ENCODE measurements at regions of chr11 and their contacts with region 1.

Region 1: GRCh38 chr11:34357701-34358257 is at the start of gene ABTB2:
- DNase-seq: peak; percentile 96 to 97
- ATAC-seq: peak; percentile 78 to 88
- H3K4me3 ChIP-seq: peak within 1 kb of the TSS; percentile 79
- H3K27ac ChIP-seq: peak within 1 kb of the TSS; percentile 79 to 91
- H3K4me1 ChIP-seq: peaks cover 32% of the 10 kb centered on the region
- CTCF ChIP-seq: no peak
- EP300 ChIP-seq: no peak
- POLR2A ChIP-seq: peak; percentile 99
- RAD21 ChIP-seq: peak in 1 of 2 experiments; percentile 17; a peak in 4 of 5 replicates
- polyA plus RNA-seq, gene ABTB2: 8.9 and 10.3 TPM in 2 replicates

Region 2: DNA sequence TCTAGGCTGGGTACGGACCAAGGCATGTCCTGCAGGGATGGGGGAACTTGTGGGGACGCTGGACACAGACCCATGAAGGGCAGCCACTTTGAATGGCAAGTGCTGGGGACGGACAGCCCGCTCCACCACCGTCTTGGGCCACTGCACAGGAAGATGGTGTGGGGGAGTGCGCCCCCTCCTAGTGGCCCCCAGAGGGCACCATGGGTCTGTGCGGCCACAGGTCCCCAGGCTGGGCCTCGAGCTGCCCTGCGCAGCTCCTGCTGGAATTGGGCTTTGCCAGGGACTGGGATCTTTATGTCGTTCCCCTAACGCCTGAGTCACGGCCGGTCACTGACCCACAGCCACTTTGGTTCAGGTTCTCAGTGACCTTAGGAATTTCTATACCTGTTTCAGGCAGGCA is 208.0 kb before region 1 on chr11:
- CTCF ChIA-PET with region 1: interaction called, 17 read pairs
- POLR2A ChIA-PET with region 1: no interaction called
- DNase-seq: peak; percentile 33 to 36
- ATAC-seq: peak; percentile 57 to 80
- H3K4me3 ChIP-seq: no peak overlapping the region
- H3K27ac ChIP-seq: no peak overlapping the region
- H3K4me1 ChIP-seq: no peaks in the 10 kb centered on the region
- CTCF ChIP-seq: peak; percentile 34
- EP300 ChIP-seq: no peak
- POLR2A ChIP-seq: no peak
- RAD21 ChIP-seq: peak; percentile 54 to 62

Region 3: DNA sequence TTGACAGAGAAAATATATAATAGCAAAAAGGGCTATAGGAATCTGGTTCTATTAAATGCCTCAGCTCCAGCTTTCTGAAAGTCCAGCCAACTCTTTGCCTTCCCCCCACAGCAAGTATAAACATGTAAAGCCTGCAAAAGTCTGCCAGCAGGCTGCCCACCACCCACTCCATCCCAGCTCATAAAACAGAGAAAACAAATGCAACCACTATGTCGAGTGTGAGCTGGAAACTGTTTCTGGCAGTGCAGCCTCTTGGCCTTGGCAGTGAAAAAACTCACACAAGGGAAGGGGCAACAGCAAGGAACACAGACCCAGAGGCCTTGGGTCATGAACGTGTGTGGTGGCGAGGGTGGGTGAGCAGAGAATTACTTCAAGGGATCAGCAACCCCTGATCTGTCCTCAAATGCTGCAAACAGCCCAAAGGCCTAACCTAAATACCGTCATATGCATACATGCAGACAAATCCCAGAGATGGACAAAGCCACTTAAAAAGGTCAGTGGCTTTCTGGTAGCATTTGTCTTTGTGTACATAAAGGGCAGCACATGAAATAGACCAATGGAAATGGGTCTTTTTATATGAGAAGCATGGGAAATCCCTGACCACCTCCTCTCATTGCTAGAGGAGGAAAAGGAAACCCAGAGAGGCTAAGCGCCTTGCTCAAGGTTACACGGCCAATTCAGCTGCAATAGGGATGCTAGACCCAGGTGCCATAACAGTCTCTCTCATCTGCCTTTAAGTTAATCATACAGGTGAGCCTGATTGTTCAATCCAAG is 177.6 kb before region 1 on chr11:
- CTCF ChIA-PET with region 1: interaction called, 170 read pairs
- POLR2A ChIA-PET with region 1: interaction called, 40 read pairs
- DNase-seq: no peak
- ATAC-seq: no peak
- H3K4me3 ChIP-seq: no peak overlapping the region
- H3K27ac ChIP-seq: no peak overlapping the region
- H3K4me1 ChIP-seq: peaks cover 12% of the 10 kb centered on the region
- CTCF ChIP-seq: no peak
- EP300 ChIP-seq: no peak
- POLR2A ChIP-seq: no peak
- RAD21 ChIP-seq: no peak

Region 4: GRCh38 chr11:34214961-34215805 is 142.6 kb before region 1 on chr11:
- CTCF ChIA-PET with region 1: interaction called, 11 read pairs
- POLR2A ChIA-PET with region 1: interaction called, 5 read pairs
- DNase-seq: peak; percentile 63 to 64
- ATAC-seq: peak; percentile 80 to 91
- H3K4me3 ChIP-seq: no peak overlapping the region
- H3K27ac ChIP-seq: peak overlapping the region; percentile 20 to 70; a peak in 5 of 6 replicates
- H3K4me1 ChIP-seq: peaks cover 59% of the 10 kb centered on the region
- CTCF ChIP-seq: no peak
- EP300 ChIP-seq: no peak
- POLR2A ChIP-seq: no peak
- RAD21 ChIP-seq: no peak

Region 5: DNA sequence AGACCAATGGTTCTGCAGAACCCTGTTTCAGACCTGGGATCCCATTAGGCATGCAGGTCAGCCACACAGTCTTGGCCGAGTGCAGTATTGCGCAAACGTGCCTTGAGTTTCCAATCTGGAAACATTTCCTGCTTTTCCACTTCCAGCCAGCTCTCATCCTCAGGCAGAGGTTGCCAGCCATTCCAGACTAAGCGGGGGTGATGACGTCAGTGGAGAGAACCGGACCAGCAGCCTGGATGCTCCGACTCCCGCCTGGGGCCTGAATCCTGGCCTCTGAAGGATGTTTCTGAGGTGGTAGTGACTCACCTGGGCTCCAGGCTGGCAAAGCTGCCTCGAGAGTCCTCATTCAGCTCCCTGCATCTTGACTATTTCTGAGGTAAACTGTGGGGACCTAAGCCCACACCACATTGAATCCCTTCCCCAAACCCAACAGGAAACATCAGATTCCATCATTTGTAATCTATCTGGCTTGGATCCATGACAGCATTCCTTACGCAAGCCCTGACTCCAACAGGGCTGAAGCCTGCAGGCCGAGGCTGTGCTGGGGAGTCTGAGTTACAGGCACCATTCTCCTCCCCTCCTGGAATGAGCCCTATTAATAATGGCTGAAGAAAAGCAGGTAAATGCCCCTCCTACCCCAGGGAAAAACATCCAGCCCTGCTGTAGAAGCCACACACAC is 82.9 kb before region 1 on chr11:
- CTCF ChIA-PET with region 1: interaction called, 5 read pairs
- POLR2A ChIA-PET with region 1: interaction called, 10 read pairs
- DNase-seq: peak; percentile 94 to 96
- ATAC-seq: peak; percentile 96 to 100
- H3K4me3 ChIP-seq: no peak overlapping the region
- H3K27ac ChIP-seq: peak overlapping the region; percentile 72 to 90
- H3K4me1 ChIP-seq: peaks cover 41% of the 10 kb centered on the region
- CTCF ChIP-seq: no peak
- EP300 ChIP-seq: peak; percentile 68 to 75; a peak in 4 of 5 replicates
- POLR2A ChIP-seq: no peak
- RAD21 ChIP-seq: peak; percentile 24 to 47; a peak in 4 of 5 replicates

Region 6: GRCh38 chr11:34395916-34396550 is 38.3 kb after region 1 on chr11:
- CTCF ChIA-PET with region 1: no interaction called
- POLR2A ChIA-PET with region 1: no interaction called
- DNase-seq: peak; percentile 24 to 32
- ATAC-seq: peak; percentile 64 to 68; a peak in 4 of 6 replicates
- H3K4me3 ChIP-seq: no peak overlapping the region
- H3K27ac ChIP-seq: peak overlapping the region; percentile 49 to 62; a peak in 5 of 6 replicates
- H3K4me1 ChIP-seq: peaks cover 20% of the 10 kb centered on the region
- CTCF ChIP-seq: no peak
- EP300 ChIP-seq: no peak
- POLR2A ChIP-seq: no peak
- RAD21 ChIP-seq: no peak

Region 7: GRCh38 chr11:35116762-35117640 is 759.2 kb after region 1 on chr11:
- CTCF ChIA-PET with region 1: no interaction called
- POLR2A ChIA-PET with region 1: no interaction called
- DNase-seq: no peak
- ATAC-seq: no peak
- H3K4me3 ChIP-seq: no peak overlapping the region
- H3K27ac ChIP-seq: peak overlapping the region in 1 of 2 experiments; percentile 57; a peak in 3 of 6 replicates
- H3K4me1 ChIP-seq: peaks cover 11% of the 10 kb centered on the region
- CTCF ChIP-seq: no peak
- EP300 ChIP-seq: no peak
- POLR2A ChIP-seq: no peak
- RAD21 ChIP-seq: no peak